ENCODE measurements at regions of chr11 and their contacts with region 1.

Region 1: GRCh38 chr11:47980245-47981049 is at the start of gene PTPRJ:
- DNase-seq: peak in 1 of 2 experiments; percentile 66
- H3K4me3 ChIP-seq: peak within 1 kb of the TSS; percentile 93
- H3K27ac ChIP-seq: peak within 1 kb of the TSS; percentile 14; the same call in 1 of the 2 replicates
- H3K4me1 ChIP-seq: peaks cover 54% of the 10 kb centered on the region
- H3K27me3 ChIP-seq: no peaks in the 10 kb centered on the region
- CTCF ChIP-seq: no peak
- total RNA-seq, gene PTPRJ: 43.3 and 43.7 TPM in 2 replicates

Region 2: DNA sequence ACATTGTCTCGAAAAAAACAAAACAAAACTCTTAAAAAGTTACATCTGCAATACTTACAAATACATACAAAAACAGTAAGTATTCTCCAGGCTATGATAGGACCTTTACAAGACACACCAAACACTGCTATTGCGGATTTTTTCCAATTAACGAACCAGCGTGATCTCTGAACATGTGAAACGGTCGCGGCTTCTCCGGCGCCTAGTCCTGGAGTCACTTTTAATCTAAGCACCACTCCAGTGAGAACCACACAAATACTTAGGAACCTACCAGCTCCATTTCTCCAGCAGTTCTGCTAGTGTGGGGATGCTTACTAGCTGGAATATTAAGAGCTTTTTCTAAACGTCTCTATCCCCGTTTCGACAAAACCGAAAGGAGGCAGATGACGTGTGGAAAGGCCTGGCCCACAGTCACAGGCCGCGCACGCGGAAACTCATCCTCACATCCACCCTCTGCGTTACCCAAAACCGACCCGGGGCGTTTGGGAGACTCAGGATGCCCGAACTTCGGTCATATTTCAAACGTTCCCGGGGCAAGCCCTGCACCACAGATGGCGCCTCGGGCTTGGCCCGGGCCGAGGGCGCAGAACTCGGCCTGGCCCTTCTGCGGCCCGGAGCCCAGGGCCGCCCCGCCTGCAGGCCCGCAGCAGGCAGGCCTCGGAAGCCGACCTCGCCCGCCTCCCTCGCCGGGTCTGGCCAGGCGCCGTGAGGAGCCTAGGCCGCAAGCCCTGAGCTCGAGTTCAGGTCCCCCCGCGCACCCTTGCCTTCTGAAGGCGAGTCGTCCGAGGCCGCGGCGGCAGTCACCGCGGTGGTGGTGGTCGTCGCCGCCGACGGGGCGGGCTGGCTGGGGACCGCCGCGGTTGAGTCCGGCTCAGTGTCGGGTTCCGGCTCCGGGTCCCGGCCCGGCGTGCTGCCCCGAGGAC is 213.9 kb before region 1 on chr11:
- CTCF ChIA-PET with region 1: no interaction called
- POLR2A ChIA-PET with region 1: no interaction called
- intact Hi-C with region 1: loop called (anchors 5 kb)
- DNase-seq: peak in 1 of 2 experiments; percentile 56
- H3K4me3 ChIP-seq: peak overlapping the region; percentile 81
- H3K27ac ChIP-seq: peak overlapping the region; percentile 83
- H3K4me1 ChIP-seq: peaks cover 22% of the 10 kb centered on the region
- H3K27me3 ChIP-seq: no peaks in the 10 kb centered on the region
- CTCF ChIP-seq: no peak

Region 3: GRCh38 chr11:47856186-47856585 is 124.3 kb before region 1 on chr11:
- CTCF ChIA-PET with region 1: interaction called, 13 read pairs
- POLR2A ChIA-PET with region 1: no interaction called
- intact Hi-C with region 1: no loop called
- DNase-seq: no peak
- H3K4me3 ChIP-seq: no peak overlapping the region
- H3K27ac ChIP-seq: no peak overlapping the region
- H3K4me1 ChIP-seq: peaks cover 16% of the 10 kb centered on the region
- H3K27me3 ChIP-seq: no peaks in the 10 kb centered on the region
- CTCF ChIP-seq: no peak

Region 4: DNA sequence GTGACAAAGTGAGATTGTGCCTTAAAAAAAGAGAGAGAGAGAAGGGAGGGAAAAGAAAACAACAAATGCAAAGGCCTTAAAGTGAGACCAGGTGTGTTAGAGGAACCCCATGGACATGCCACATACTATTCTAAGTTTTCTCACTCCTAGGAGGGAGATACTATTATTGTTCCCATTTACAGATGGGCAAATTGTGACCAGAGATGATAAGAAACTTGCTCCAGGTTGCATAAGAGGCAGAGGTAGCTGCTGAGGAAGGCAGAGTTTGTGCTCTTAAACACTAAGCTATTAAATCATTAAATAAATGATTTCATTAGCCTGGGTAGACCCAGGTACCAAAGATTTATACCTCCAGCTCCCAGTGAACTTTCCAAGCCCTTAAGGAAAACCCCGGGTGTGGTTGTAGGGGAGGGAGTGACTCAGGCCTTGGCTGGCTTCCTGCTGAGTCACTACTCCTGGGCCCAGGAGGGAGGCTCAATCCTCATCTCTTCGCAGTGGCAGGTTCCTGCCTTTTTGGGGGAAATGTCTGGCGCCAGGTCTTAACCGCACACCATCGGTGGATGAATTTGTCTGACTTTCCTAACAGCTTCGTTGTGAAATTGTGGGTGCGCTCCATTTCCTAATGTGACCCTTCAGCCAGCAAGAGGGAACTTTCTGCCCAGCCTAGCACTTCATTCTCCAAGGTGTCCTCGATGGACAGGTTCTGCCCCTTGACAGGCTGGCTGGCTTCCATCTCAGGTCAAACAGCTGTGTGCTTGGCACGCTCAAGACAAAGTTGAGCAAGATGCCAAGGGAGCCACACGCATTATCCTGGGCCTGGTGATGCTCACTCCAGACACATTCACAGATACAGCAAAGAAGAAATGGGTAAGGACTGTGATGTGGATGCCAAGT is 33.5 kb before region 1 on chr11:
- CTCF ChIA-PET with region 1: interaction called, 3 read pairs
- POLR2A ChIA-PET with region 1: no interaction called
- intact Hi-C with region 1: loop called (anchors 1 kb)
- DNase-seq: peak; percentile 93 to 99
- H3K4me3 ChIP-seq: no peak overlapping the region
- H3K27ac ChIP-seq: peak overlapping the region; percentile 79
- H3K4me1 ChIP-seq: peaks cover 55% of the 10 kb centered on the region
- H3K27me3 ChIP-seq: no peaks in the 10 kb centered on the region
- CTCF ChIP-seq: no peak

Region 5: DNA sequence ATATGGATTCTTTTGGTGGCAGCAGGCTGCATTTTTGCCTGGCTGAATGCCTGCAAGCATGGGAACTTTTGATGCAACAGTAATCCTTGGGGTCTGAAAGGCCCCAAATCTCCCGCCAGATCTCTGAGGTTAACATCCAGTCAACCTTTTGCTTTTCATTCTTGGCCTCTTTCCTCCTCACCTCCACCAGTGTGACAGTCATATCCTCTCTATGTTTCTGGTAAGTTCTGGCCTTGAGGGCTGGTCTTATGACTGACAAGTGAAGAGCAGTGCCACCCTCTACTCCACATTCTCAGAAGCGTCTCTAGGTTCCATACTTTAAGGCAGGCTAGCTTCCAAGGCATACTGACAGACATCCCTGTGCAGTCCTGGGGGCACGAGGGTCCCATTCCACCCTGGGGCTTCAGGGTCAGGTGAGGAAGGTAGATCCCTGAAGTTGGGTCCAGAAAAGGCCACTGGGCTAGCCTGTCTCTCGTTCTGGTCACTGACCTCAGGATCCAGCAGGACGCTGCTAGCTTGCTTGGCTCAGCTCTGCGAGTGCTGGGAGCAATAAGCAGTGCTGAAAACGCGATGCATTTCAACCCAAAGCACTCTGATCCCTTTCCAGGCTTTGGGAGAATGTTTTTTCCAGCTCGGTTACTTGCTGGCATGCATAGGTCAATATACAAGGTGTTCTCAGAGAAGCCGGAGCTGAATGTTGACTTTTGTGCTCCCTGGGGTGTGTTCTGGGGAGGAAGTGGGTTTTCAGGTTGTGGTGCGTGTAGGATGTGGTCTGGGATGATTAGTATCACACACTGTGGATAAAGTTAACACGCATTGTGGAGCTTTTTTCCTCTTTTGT is 75.1 kb after region 1 on chr11:
- CTCF ChIA-PET with region 1: interaction called, 4 read pairs
- POLR2A ChIA-PET with region 1: interaction called, 23 read pairs
- intact Hi-C with region 1: no loop called
- DNase-seq: peak; percentile 81 to 100
- H3K4me3 ChIP-seq: peak overlapping the region; percentile 46; the same call in 1 of the 2 replicates
- H3K27ac ChIP-seq: peak overlapping the region; percentile 96
- H3K4me1 ChIP-seq: peaks cover 91% of the 10 kb centered on the region
- H3K27me3 ChIP-seq: no peaks in the 10 kb centered on the region
- CTCF ChIP-seq: no peak

Region 6: GRCh38 chr11:48109046-48109666 is 128.7 kb after region 1 on chr11:
- CTCF ChIA-PET with region 1: interaction called, 3 read pairs
- POLR2A ChIA-PET with region 1: interaction called, 5 read pairs
- intact Hi-C with region 1: loop called (anchors 2 kb)
- DNase-seq: peak in 1 of 2 experiments; percentile 70
- H3K4me3 ChIP-seq: peak overlapping the region; percentile 31; the same call in 1 of the 2 replicates
- H3K27ac ChIP-seq: peak overlapping the region; percentile 49
- H3K4me1 ChIP-seq: peaks cover 41% of the 10 kb centered on the region
- H3K27me3 ChIP-seq: no peaks in the 10 kb centered on the region
- CTCF ChIP-seq: no peak; the same call in 1 of the 2 replicates

Measured in PC-9 (cell line).